Activated T-helper 1 cell treated with anti-CD3 and anti-CD28 coated beads, Interleukin-12 subunit alpha, Interleukin-12 subunit beta, Interleukin-2, Interleukin-4 antibody, amounts not matched to agents 30 ng/mL and 10 ng/mL and 1 ng/mL, durations not matched to agents 14 hours and 24 hours and 36 hours (primary cell): ENCODE measurements at regions of chr20 and their contacts with region 1.

Region 1: DNA sequence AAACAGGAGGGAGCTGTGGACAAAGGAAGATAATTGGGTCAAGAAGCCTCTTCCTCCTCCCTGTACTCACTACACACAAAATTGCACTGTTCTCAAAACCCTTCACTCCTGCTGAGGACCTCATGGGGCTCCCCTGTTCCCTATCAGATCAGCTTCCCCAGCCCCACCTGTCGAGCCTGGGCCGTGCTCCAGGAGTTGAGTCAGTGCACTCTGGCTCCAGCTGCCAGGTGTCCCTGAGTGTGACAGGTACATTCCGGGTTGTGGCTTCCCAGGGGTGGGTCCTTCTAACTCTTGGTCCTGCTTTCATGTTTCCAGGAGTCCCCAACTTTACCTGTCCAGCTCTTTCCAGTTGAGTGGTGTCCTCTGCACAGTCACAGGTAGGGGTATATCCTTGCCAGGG is 8.4 kb downstream of the RAB5IF start:
- DNase-seq: no peak
- H3K4me3 Mint-ChIP-seq: no peak overlapping the region
- H3K27ac Mint-ChIP-seq: peak overlapping the region; percentile 52
- H3K4me1 Mint-ChIP-seq: peaks cover 15% of the 10 kb centered on the region
- H3K27me3 Mint-ChIP-seq: no peaks in the 10 kb centered on the region

Region 2: GRCh38 chr20:36728986-36729385 is 115.0 kb after region 1 on chr20:
- intact Hi-C with region 1: loop called (anchors 5 kb)
- DNase-seq: no peak
- H3K4me3 Mint-ChIP-seq: no peak overlapping the region
- H3K27ac Mint-ChIP-seq: no peak overlapping the region
- H3K4me1 Mint-ChIP-seq: peaks cover 12% of the 10 kb centered on the region
- H3K27me3 Mint-ChIP-seq: no peaks in the 10 kb centered on the region